Activated CD4-positive, alpha-beta T cell treated with anti-CD3 and anti-CD28 coated beads for 36 hours (primary cell): ENCODE measurements at regions of chr17 and their contacts with region 1.

Region 1: DNA sequence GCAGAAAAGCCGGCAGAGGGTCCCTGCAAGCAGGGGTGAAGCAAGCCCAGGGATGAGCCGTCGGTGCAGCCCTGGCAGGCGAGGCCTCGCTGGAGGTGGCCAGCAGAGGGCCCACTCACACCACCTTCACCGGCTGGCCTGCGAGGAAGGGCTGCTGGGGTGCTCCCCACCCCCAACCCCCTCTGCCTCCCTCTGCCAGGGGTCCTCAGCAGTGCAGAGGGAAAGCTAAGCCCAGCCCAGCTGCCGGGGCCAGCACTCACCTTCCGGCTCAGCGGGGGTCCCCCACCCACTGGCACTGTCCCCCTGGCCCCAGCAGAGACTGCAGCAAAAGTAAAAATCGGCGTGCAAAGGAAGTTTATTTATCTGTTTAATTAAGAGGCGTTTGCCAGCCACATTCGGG is 113.4 kb downstream of the ENGASE start:
- DNase-seq: peak; percentile 51
- ATAC-seq: peak; percentile 63
- H3K4me3 Mint-ChIP-seq: no peak overlapping the region
- H3K27ac Mint-ChIP-seq: no peak overlapping the region
- H3K4me1 Mint-ChIP-seq: peaks cover 3% of the 10 kb centered on the region
- H3K27me3 Mint-ChIP-seq: peaks cover 39% of the 10 kb centered on the region

Region 2: DNA sequence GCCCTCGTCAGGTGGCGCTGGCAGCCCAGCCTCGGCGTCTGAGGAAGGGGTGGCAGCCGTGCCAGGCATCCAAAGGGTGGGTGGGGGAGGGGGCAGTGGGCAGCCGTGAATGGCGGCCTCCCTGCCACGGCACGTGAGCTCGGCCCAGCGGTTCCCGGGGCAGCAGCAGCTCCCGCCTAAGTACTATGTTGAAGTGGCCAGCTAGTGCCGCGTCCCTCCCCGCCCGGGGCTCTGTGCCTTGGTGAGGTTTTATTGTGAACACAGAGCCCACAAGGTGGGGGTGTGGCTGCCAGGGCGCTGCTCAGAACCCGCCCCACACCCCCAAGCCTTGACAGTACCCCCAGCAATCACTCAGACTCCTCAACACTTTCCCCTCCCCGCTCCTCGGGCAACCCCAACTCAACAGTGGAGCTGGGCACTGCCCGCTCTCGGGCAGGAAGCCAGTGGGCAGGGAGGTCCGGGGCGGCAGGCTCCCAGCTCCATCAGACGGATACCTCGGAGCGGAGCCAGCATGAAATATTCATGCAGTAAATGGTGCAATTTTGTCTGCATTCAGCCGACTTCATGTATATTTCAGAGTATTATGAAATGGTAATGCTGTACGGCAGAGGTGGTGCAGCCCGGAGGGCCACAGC is 33.0 kb before region 1 on chr17:
- CTCF ChIA-PET with region 1: no interaction called
- POLR2A ChIA-PET with region 1: no interaction called
- intact Hi-C with region 1: no loop called
- DNase-seq: no peak
- ATAC-seq: no peak
- H3K4me3 Mint-ChIP-seq: no peak overlapping the region
- H3K27ac Mint-ChIP-seq: no peak overlapping the region
- H3K4me1 Mint-ChIP-seq: no peaks in the 10 kb centered on the region
- H3K27me3 Mint-ChIP-seq: no peaks in the 10 kb centered on the region

Region 3: GRCh38 chr17:79294459-79295071 is 106.5 kb after region 1 on chr17:
- CTCF ChIA-PET with region 1: interaction called, 3 read pairs
- POLR2A ChIA-PET with region 1: no interaction called
- intact Hi-C with region 1: loop called in 1 of 2 experiments (anchors 5 kb)
- DNase-seq: peak; percentile 74
- ATAC-seq: peak; percentile 23
- H3K4me3 Mint-ChIP-seq: no peak overlapping the region
- H3K27ac Mint-ChIP-seq: no peak overlapping the region
- H3K4me1 Mint-ChIP-seq: no peaks in the 10 kb centered on the region
- H3K27me3 Mint-ChIP-seq: peaks cover 15% of the 10 kb centered on the region

Region 4: GRCh38 chr17:79400989-79401703 is 213.1 kb after region 1 on chr17:
- CTCF ChIA-PET with region 1: no interaction called
- POLR2A ChIA-PET with region 1: no interaction called
- intact Hi-C with region 1: no loop called
- DNase-seq: peak; percentile 84
- ATAC-seq: peak; percentile 96
- H3K4me3 Mint-ChIP-seq: peak overlapping the region; percentile 56
- H3K27ac Mint-ChIP-seq: peak overlapping the region; percentile 44
- H3K4me1 Mint-ChIP-seq: peaks cover 12% of the 10 kb centered on the region
- H3K27me3 Mint-ChIP-seq: peaks cover 39% of the 10 kb centered on the region

Region 5: DNA sequence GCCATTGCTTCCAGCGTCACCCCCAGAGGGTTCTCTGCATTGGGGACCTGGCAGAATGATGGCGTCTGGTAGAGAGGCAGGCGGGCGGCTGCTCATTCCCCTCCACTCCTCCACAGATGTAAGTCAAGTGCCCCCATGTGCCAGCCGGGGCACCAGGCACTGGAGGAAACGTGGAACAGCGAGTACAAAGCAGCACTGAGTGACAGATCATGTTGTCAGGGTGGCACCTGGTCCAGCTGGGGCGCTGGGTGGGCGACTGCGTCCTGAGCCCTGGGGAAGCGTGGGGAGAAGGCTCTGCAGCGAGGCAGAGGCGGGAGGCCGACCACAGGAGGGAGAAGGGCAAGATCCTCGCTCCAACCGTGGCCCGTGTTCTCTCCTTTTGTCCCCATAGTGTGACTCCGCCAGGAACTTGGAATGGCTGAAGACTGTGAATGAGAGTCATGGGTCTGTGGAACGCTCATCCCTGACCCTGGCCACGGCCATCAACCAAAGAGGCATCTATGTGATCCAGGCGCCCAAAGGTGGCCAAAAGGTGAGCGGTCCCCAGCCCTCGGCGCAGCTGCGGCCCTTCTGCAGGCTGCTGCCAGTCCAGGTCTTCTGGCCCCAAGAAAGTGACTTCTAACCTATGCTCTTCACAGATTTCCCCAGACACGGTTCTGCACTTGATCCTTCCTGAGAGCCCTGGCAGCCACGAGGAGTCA is 1149.3 kb after region 1 on chr17:
- CTCF ChIA-PET with region 1: no interaction called
- POLR2A ChIA-PET with region 1: no interaction called
- intact Hi-C with region 1: no loop called
- DNase-seq: no peak
- ATAC-seq: no peak
- H3K4me3 Mint-ChIP-seq: no peak overlapping the region
- H3K27ac Mint-ChIP-seq: no peak overlapping the region
- H3K4me1 Mint-ChIP-seq: no peaks in the 10 kb centered on the region
- H3K27me3 Mint-ChIP-seq: no peaks in the 10 kb centered on the region